Left colon (tissue), 2 donors: ENCODE measurements at regions of chr13 and their contacts with region 1.

Region 1: GRCh38 chr13:76903544-76904162 is 17.4 kb upstream of the KCTD12 start:
- DNase-seq: peak; percentile 36 to 70
- ATAC-seq: peak; percentile 92

Region 2: GRCh38 chr13:75870397-75870903 is 1033.2 kb before region 1 on chr13:
- intact Hi-C with region 1: loop called in 1 of 2 experiments (anchors 5 kb)
- DNase-seq: no peak
- ATAC-seq: no peak

Region 3: GRCh38 chr13:76637641-76638141 is 266.0 kb before region 1 on chr13:
- intact Hi-C with region 1: no loop called
- DNase-seq: no peak
- ATAC-seq: no peak

Region 4: DNA sequence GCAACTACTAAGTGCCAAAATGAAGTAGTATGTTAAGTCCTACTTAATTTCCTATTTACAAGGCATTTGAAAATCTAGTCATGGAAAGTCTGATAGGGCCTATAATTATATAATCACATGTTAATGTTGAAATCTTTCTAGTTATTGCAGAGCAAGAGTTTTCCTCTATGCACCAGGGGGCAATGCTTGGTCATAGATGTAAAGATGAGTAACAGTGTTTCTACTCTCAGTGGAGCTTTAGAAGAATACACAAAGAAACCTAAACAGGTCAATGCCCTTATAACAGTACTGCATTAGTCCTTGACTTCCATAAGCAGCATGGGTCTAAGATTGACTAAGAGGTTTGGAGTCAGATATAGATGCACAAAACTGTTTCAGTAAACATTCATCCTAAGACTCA is 236.1 kb before region 1 on chr13:
- intact Hi-C with region 1: loop called in 1 of 2 experiments (anchors 5 kb)
- DNase-seq: no peak
- ATAC-seq: peak; percentile 57

Region 5: DNA sequence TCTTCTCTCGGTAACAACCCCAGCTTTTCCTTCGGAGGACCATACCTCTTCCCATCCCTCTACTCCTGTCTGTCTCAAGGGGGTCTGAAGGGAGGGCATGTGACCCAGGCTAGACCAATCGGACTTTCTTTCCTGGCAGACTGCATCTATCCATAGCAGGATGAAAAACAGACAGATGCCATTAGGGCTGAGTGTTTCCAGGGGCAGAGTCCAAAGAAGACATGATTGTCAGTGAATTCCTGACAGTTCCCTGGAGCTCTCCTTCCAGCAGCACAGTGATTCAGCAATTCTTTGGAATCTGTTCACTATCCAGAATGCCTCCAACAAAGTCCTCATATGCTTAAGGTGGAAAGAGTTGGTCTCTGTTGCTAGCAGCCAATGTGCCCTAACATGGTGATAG is 207.3 kb before region 1 on chr13:
- intact Hi-C with region 1: no loop called
- DNase-seq: no peak
- ATAC-seq: no peak

Region 6: DNA sequence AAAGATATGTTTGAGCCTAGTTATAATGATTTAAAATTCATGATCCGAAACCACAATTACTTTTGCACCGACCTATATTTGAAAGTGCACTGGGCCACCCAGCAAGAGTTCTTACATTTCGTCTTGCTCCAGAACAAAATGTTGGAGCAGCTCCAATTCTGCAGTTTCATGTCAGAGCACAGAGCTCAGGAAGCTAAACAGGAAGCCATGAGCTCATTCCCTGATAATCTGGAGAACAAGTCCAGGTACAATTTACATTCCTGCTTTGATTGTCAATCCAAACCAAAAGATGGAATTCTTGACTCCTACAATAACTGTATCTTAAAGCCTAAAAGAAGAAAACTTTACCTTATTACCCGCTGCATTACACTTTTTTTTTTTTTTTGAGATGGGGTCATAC is 149.2 kb before region 1 on chr13:
- intact Hi-C with region 1: no loop called
- DNase-seq: no peak
- ATAC-seq: no peak